Activated CD4-positive, alpha-beta memory T cell treated with anti-CD3 and anti-CD28 coated beads for 36 hours (primary cell): ENCODE measurements at regions of chr3 and their contacts with region 1.

Region 1: DNA sequence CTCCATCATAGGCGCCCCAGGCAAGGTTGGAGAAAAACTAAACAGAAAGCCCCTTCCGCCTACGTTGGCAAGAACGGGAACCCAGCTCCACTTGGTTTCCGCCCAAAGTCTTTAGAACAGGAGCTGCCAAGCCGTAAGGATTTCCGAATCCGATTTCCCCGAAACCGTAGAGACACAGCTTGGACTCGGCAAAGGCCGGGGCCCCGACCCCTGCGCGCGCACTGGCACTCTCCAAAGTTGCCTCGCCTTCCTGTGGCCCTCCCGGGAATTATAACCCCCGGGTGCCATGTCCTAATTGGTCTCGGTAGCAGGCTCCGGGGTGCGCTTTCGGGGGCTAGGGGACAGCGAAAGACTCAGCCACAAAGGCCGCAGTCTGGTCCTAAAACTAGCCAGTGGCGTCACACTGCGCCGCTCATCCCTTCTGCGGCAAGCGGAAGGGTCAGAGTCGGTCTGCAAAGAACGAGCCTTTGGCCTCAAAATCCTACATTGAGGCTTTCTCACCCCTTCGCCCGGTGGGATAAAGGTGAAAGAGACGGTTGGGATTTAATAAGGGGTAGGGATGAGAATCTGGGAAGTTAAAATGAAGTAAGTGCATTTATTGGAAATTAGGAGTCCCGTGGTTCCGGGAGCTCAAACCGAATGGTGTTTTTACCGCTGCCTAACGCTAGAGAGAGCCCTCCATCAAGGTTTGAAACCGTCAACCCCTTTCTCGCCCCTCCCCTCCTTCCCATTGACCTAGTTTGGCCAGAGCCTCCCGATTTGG is 6.8 kb downstream of the BCL6 start:
- DNase-seq: peak; percentile 82
- H3K4me3 Mint-ChIP-seq: peak overlapping the region; percentile 90
- H3K27ac Mint-ChIP-seq: peak overlapping the region; percentile 99
- H3K4me1 Mint-ChIP-seq: peaks cover 44% of the 10 kb centered on the region
- H3K27me3 Mint-ChIP-seq: no peaks in the 10 kb centered on the region

Region 2: GRCh38 chr3:187802928-187803259 is 64.4 kb after region 1 on chr3:
- CTCF ChIA-PET with region 1: interaction called, 44 read pairs
- POLR2A ChIA-PET with region 1: interaction called, 102 read pairs
- intact Hi-C with region 1: no loop called
- DNase-seq: peak; percentile 89
- H3K4me3 Mint-ChIP-seq: peak overlapping the region; percentile 54
- H3K27ac Mint-ChIP-seq: peak overlapping the region; percentile 95
- H3K4me1 Mint-ChIP-seq: peaks cover 96% of the 10 kb centered on the region
- H3K27me3 Mint-ChIP-seq: no peaks in the 10 kb centered on the region

Region 3: DNA sequence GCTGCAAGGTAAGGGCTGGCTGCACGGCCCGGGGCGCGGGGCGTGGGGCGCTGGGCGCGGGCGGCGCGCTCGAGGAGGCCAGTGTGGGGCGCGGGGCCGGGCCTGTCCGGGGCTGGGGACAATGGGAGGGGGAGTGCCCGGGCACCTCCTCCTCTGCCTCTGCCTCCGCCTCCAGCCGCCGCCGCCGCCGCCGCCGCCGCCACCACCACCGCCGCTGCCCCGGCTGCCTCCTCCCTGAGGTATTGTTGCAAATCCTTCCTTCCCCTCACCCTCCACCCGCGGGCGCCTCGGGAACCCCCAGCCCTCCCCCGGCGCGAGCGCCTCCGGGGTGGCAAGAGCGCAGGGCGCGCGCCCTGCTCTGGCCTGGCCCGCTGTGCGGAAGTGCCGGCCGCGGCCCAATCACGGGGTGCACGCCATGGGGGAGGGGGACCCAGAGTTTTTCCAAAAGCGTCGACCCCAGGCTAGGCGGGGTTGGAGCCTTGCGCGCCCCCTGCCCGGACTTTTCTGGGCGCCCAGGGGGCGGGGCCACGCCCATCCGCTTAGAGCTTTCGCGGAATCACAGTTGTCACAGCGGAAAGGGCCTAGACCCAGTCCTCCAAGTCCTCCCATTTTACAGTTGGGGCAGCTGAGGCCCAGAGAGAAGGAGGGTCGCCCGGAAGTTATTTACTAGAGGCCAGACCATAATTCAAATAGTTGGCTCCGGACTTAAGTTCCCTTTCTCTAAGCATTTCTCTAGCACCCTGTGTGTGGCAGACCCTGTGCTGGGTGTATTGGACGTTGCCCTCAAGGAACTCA is 415.7 kb after region 1 on chr3 and contains the start of gene LPP:
- CTCF ChIA-PET with region 1: interaction called, 33 read pairs
- POLR2A ChIA-PET with region 1: interaction called, 16 read pairs
- intact Hi-C with region 1: loop called (anchors 1 kb)
- DNase-seq: peak; percentile 91
- H3K4me3 Mint-ChIP-seq: peak within 1 kb of the TSS; percentile 88
- H3K27ac Mint-ChIP-seq: peak within 1 kb of the TSS; percentile 97
- H3K4me1 Mint-ChIP-seq: peaks cover 63% of the 10 kb centered on the region
- H3K27me3 Mint-ChIP-seq: no peaks in the 10 kb centered on the region
- total RNA-seq, gene LPP: 41.0 to 43.6 TPM

Region 4: DNA sequence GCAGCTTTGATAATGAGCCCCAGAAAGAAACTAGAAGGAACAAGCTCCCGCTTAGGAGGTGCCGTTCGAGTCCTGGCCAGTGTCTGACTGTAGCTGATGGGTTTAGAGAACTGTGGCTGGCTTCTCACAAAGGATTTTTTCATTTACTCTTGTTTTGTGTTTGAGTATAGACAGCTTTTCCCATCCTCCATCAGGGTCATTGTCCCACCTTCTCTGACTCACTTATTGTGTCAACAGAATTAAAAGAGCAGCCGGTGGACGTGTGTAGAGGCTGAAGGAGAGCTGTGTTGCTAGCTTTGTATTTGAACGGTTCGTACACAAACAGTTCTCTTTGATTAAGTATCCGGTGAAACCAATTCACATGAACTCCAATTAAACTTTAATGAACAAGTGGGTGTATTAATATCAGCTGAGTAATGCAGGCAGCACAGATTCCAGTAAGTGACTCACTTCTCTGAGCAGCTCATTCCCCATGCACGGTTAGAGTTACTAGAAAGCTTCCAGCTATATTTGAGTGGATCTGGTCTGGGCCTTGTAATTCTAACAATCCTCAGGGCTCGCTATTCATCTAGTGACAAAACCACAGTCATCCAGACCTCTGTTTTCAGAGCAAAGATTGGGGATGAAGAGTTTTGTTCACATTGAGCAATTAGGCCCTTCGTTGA is 556.4 kb after region 1 on chr3:
- CTCF ChIA-PET with region 1: interaction called, 64 read pairs
- POLR2A ChIA-PET with region 1: interaction called, 7 read pairs
- intact Hi-C with region 1: loop called (anchors 1 kb)
- DNase-seq: no peak
- H3K4me3 Mint-ChIP-seq: no peak overlapping the region
- H3K27ac Mint-ChIP-seq: peak overlapping the region; percentile 72
- H3K4me1 Mint-ChIP-seq: peaks cover 79% of the 10 kb centered on the region
- H3K27me3 Mint-ChIP-seq: no peaks in the 10 kb centered on the region

Region 5: DNA sequence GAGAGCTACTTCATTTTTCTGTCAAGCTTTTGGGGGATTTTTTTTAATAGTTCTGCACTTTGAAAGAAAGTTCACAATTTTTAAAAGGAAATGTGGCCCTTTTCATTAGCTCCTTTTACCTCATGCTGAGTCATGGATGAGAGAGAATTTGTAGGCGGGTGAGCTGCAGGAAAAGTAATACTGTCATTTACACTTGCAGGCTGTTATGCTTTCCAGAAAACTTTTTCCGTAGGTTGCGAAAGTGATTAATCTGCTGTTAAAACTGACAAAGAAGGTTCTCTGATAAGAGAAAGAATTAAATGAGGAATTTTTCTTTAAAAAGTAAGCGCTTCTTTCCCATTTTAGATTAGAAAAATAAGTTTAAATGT is 845.6 kb after region 1 on chr3:
- CTCF ChIA-PET with region 1: interaction called, 21 read pairs
- POLR2A ChIA-PET with region 1: interaction called, 5 read pairs
- intact Hi-C with region 1: loop called (anchors 2 kb)
- DNase-seq: peak; percentile 31
- H3K4me3 Mint-ChIP-seq: no peak overlapping the region
- H3K27ac Mint-ChIP-seq: no peak overlapping the region
- H3K4me1 Mint-ChIP-seq: peaks cover 13% of the 10 kb centered on the region
- H3K27me3 Mint-ChIP-seq: no peaks in the 10 kb centered on the region

Region 6: GRCh38 chr3:188749010-188749617 is 1010.6 kb after region 1 on chr3:
- CTCF ChIA-PET with region 1: interaction called, 47 read pairs
- POLR2A ChIA-PET with region 1: no interaction called
- intact Hi-C with region 1: loop called (anchors 1 kb)
- DNase-seq: peak; percentile 56
- H3K4me3 Mint-ChIP-seq: no peak overlapping the region
- H3K27ac Mint-ChIP-seq: no peak overlapping the region
- H3K4me1 Mint-ChIP-seq: peaks cover 29% of the 10 kb centered on the region
- H3K27me3 Mint-ChIP-seq: no peaks in the 10 kb centered on the region

Region 7: DNA sequence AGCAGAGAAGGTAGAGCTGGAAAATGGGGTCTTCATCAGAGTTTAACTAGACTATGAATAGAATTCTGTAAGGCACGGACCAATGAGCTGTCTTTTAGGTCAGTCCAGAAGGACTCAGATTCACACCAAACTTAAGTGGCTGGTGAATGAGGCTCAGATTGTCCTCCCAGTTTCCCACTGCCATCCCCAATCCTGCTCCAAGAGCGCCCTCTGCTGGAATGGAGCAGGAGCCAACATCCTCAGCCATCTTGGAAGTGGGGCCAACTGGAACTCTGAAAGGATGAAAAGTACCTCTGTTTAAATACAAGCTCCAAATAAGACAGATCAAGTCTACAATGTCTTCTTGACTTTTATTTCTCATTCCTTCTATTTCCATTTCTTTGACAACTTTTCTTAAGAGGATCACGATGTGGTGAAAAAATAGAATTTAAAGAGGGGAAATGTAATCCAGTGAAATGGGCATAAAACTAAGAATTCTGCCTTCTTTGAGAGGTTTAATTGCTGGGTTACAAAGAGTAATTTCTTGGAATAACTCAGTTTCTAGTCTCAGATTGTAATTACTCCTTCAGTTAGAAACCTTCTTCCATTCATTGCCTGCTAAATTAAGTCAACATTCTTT is 1216.2 kb after region 1 on chr3:
- CTCF ChIA-PET with region 1: interaction called, 378 read pairs
- POLR2A ChIA-PET with region 1: interaction called, 21 read pairs
- intact Hi-C with region 1: loop called (anchors 1 kb)
- DNase-seq: peak; percentile 85
- H3K4me3 Mint-ChIP-seq: no peak overlapping the region
- H3K27ac Mint-ChIP-seq: no peak overlapping the region
- H3K4me1 Mint-ChIP-seq: peaks cover 28% of the 10 kb centered on the region
- H3K27me3 Mint-ChIP-seq: peaks cover 4% of the 10 kb centered on the region